SK-N-SH (cell line): ENCODE measurements at regions of chr5 and their contacts with region 1.

Region 1: DNA sequence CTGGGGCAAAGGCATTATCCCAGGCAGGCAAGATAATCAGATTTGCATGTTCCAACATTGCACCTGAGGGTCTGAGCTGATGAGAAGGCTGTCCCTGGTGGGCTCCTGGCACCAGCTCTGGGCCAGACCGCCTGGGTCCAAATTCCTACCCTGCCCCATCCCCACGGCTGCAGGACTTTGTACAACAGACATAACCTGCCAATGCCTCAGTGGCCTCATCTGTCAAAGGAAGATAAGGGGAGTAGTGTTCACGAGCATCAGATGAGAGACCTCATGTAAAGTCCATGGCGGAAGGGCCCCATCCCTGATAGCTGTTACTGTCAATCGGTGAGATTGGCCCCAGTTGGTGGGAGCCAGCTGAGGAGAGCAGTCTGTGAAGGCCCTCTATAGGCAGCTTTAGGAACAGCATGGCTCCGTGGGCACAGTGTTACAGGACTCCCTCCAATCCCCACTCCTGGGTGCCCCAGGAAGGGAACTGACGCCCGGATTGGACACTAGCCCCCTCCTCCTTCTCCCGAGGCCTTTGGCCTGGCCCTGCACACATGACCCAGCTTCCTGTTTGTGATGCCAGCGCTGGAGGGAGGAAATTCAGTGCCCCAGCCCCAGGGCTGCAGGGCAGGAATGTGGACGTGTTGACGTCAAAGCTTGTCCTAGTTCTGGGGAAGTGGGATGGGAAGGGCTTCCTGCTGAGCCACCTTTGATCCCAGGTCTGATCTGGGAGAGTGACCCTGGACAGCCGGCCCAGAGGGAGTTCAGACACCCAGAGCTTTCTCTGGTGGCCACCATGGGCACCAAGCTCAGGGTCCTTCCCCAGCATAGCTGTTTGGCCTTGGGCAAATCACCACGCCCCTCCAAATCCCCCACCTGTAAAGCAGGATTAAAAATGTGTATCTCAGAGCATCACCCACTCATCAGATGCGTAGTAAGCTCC is 56.2 kb downstream of the DUSP1 start:
- DNase-seq: peak; percentile 81
- H3K4me3 ChIP-seq: no peak overlapping the region; a peak in 1 of 4 replicates
- H3K27ac ChIP-seq: no peak overlapping the region
- H3K4me1 ChIP-seq: peaks cover 0 to 12% of the 10 kb centered on the region in 2 experiments; a peak in 1 of 4 replicates
- H3K27me3 ChIP-seq: no peaks in the 10 kb centered on the region
- CTCF ChIP-seq: peak; percentile 81
- EP300 ChIP-seq: no peak
- RAD21 ChIP-seq: peak; percentile 56

Region 2: GRCh38 chr5:172697123-172698121 is 17.3 kb before region 1 on chr5:
- CTCF ChIA-PET with region 1: interaction called, 139 read pairs
- POLR2A ChIA-PET with region 1: no interaction called
- DNase-seq: peak; percentile 87
- H3K4me3 ChIP-seq: peak overlapping the region; percentile 48 to 68
- H3K27ac ChIP-seq: no peak overlapping the region
- H3K4me1 ChIP-seq: peaks cover 0 to 20% of the 10 kb centered on the region in 2 experiments; a peak in 2 of 4 replicates
- H3K27me3 ChIP-seq: no peaks in the 10 kb centered on the region; the same call in 1 of the 2 replicates
- CTCF ChIP-seq: peak; percentile 89
- EP300 ChIP-seq: no peak
- RAD21 ChIP-seq: peak; percentile 96

Region 3: DNA sequence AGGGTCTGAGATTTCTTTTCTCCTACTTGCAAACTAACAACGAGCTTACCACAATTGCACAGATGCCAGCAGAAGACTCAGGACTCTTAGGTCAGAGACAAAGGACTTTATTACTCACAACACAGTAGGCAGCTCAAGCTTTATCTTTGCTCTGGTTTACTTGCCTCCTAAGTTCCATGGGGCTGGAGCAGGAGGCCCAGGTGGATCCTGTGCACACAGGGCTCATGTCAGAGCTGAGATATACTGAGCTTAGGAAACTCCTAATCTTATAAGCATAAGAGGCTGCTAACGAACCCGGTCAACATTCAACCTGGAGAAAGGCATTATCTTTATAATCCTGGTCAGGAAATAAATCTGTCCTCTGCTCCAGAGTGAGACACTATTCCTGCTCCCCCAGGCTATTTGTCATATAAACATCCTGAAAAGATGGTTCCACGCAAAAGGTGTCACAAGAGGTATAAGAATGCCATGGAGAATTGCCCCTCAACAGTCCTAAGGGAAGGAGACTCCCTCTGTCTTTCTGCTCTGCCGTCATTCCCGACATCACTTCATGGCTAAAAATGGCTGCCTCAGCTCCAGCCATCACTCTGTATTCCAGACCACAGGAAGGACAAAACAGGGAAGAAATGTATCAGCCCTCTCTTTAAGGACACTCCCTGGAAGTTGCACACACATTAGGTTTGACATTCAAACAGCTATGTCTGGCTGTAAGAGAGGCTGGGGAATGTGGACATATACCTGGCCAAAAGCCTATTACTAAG is 40.0 kb after region 1 on chr5:
- CTCF ChIA-PET with region 1: interaction called, 13 read pairs
- POLR2A ChIA-PET with region 1: no interaction called
- DNase-seq: no peak
- H3K4me3 ChIP-seq: no peak overlapping the region
- H3K27ac ChIP-seq: no peak overlapping the region
- H3K4me1 ChIP-seq: 0 out of 4 replicates have a peak, but pooled peaks cover 0 to 5% of the 10 kb centered on the region in 2 experiments
- H3K27me3 ChIP-seq: no peaks in the 10 kb centered on the region
- CTCF ChIP-seq: no peak
- EP300 ChIP-seq: no peak
- RAD21 ChIP-seq: no peak

Region 4: GRCh38 chr5:172777881-172778814 is 63.4 kb after region 1 on chr5:
- CTCF ChIA-PET with region 1: interaction called, 113 read pairs
- POLR2A ChIA-PET with region 1: no interaction called
- DNase-seq: no peak
- H3K4me3 ChIP-seq: peak overlapping the region in 1 of 2 experiments; percentile 22; a peak in 1 of 4 replicates
- H3K27ac ChIP-seq: peak overlapping the region in 1 of 2 experiments; percentile 86; a peak in 2 of 4 replicates
- H3K4me1 ChIP-seq: peaks cover 0 to 23% of the 10 kb centered on the region in 2 experiments; a peak in 3 of 4 replicates
- H3K27me3 ChIP-seq: no peaks in the 10 kb centered on the region
- CTCF ChIP-seq: no peak
- EP300 ChIP-seq: no peak
- RAD21 ChIP-seq: no peak

Region 5: DNA sequence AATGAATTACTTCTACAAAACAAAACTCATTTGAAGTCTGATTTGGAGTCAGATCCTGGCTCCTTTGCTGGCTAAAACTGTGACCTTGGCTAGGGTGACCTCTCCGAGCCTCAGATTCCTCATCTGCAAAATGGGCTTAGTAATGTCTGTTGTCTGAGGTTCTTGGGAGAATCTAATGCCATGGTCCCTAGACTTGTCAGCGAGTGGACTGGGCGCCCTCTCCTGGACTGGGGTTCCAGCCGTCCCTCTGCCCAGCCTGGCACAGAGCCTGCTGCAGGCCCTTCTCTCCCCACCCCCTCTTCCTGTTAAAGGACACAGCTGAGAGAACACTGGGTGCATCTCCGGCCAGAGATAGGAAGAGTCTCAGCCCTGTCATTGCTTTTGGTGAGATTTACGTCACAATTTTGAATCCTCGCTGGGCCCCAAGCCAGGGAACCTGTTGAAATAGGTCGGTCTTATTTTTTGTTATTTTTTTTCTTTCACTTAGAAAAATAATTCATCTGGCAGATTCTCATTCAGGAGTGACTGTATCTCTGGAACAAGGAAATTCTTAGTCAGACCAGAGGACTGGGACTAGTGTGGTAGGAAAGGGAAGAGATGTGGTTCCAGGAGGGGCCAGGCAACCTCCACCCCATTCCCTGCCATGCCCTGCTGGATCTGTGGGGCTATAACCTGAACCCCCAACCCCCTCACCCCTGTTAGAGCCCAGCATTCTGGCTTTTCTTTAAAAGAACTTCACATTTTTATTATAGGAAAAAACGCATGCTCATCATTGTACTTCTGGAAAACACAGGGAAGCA is 196.3 kb after region 1 on chr5:
- CTCF ChIA-PET with region 1: interaction called, 16 read pairs
- POLR2A ChIA-PET with region 1: no interaction called
- DNase-seq: peak; percentile 75
- H3K4me3 ChIP-seq: no peak overlapping the region
- H3K27ac ChIP-seq: peak overlapping the region in 1 of 2 experiments; percentile 88; a peak in 2 of 4 replicates
- H3K4me1 ChIP-seq: peaks cover 0 to 16% of the 10 kb centered on the region in 2 experiments; a peak in 2 of 4 replicates
- H3K27me3 ChIP-seq: no peaks in the 10 kb centered on the region
- CTCF ChIP-seq: peak; percentile 63
- EP300 ChIP-seq: no peak; a peak in 1 of 4 replicates
- RAD21 ChIP-seq: peak; percentile 67

Region 6: GRCh38 chr5:172958331-172959046 is 243.7 kb after region 1 on chr5:
- CTCF ChIA-PET with region 1: interaction called, 12 read pairs
- POLR2A ChIA-PET with region 1: no interaction called
- DNase-seq: peak; percentile 95
- H3K4me3 ChIP-seq: peak overlapping the region; percentile 86 to 99
- H3K27ac ChIP-seq: peak overlapping the region in 1 of 2 experiments; percentile 97; a peak in 3 of 4 replicates
- H3K4me1 ChIP-seq: peaks cover 10 to 14% of the 10 kb centered on the region in 2 experiments; a peak in 2 of 4 replicates
- H3K27me3 ChIP-seq: no peaks in the 10 kb centered on the region
- CTCF ChIP-seq: no peak
- EP300 ChIP-seq: no peak
- RAD21 ChIP-seq: no peak

Region 7: DNA sequence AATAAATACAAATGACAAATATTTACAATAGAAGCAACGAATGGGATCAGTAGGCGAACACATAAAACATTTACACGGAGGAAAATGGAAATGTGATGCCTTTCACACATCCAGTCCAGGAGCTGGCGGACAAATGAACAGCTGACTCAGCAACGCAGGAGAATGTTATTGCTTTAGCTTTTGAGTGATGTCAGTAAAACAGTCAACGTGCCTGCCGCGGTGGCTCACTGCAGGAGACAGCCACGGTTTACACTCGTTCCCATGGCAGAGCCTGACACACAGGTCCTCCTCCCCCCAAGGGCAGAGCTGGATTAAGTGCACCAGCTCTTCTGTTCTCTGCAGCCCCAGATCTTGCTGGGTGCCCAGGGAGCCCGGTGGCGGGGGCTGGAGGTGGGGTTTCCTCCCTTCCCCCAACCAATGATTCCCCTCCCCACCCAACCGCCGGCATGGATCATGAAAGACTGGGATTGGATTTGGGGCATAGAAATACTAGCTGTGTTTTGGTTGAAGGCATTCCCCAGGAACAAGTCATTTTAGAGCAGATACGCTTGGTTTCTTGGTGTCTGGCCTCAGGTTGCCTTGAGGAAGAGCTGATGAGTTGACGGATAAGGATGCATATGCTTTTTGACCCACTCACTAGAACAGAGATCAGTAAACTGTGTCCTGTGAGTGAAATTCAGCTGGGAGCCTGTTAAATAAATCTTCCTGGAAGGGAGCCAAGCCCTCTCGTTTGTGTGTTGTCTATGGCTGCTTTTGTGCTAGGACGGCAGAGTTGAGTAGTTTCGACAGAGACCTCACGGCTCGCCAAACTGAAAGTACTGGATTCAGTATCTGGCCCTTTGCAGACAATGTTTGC is 601.0 kb after region 1 on chr5:
- CTCF ChIA-PET with region 1: no interaction called
- POLR2A ChIA-PET with region 1: no interaction called
- DNase-seq: peak; percentile 83
- H3K4me3 ChIP-seq: no peak overlapping the region; a peak in 1 of 4 replicates
- H3K27ac ChIP-seq: peak overlapping the region; percentile 10 to 80; a peak in 2 of 4 replicates
- H3K4me1 ChIP-seq: peaks cover 13 to 29% of the 10 kb centered on the region in 2 experiments; a peak in 3 of 4 replicates
- H3K27me3 ChIP-seq: no peaks in the 10 kb centered on the region
- CTCF ChIP-seq: no peak
- EP300 ChIP-seq: peak in 1 of 2 experiments; percentile 3; a peak in 1 of 4 replicates
- RAD21 ChIP-seq: no peak